T-cell (primary cell): ENCODE measurements at regions of chr13 and their contacts with region 1.

Region 1: GRCh38 chr13:73465617-73465971 is 406.8 kb downstream of the KLF5 start:
- DNase-seq: no peak
- ATAC-seq: no peak
- H3K4me3 ChIP-seq: no peak overlapping the region
- H3K4me3 Mint-ChIP-seq: no peak overlapping the region
- H3K27ac ChIP-seq: no peak overlapping the region
- H3K27ac Mint-ChIP-seq: no peak overlapping the region
- H3K4me1 ChIP-seq: no peaks in the 10 kb centered on the region
- H3K4me1 Mint-ChIP-seq: no peaks in the 10 kb centered on the region
- H3K27me3 ChIP-seq: peaks cover 0 to 2% of the 10 kb centered on the region in 2 experiments
- H3K27me3 Mint-ChIP-seq: peaks cover 3 to 4% of the 10 kb centered on the region in 2 donors

Region 2: GRCh38 chr13:74191410-74191809 is 725.8 kb after region 1 on chr13:
- CTCF ChIA-PET with region 1: interaction called in 1 of 2 experiments, 11 read pairs
- POLR2A ChIA-PET with region 1: no interaction called
- DNase-seq: no peak
- ATAC-seq: peak in 2 of 4 experiments; percentile 67 to 71
- H3K4me3 ChIP-seq: no peak overlapping the region
- H3K4me3 Mint-ChIP-seq: no peak overlapping the region
- H3K27ac ChIP-seq: no peak overlapping the region
- H3K27ac Mint-ChIP-seq: no peak overlapping the region
- H3K4me1 ChIP-seq: peaks cover 9 to 10% of the 10 kb centered on the region in 2 experiments
- H3K4me1 Mint-ChIP-seq: peaks cover 33 to 39% (median 36%) of the 10 kb centered on the region in 3 donors
- H3K27me3 ChIP-seq: no peaks in the 10 kb centered on the region
- H3K27me3 Mint-ChIP-seq: no peaks in the 10 kb centered on the region